Body of pancreas (tissue), 4 donors: ENCODE measurements at regions of chr2 and their contacts with region 1.

Region 1: DNA sequence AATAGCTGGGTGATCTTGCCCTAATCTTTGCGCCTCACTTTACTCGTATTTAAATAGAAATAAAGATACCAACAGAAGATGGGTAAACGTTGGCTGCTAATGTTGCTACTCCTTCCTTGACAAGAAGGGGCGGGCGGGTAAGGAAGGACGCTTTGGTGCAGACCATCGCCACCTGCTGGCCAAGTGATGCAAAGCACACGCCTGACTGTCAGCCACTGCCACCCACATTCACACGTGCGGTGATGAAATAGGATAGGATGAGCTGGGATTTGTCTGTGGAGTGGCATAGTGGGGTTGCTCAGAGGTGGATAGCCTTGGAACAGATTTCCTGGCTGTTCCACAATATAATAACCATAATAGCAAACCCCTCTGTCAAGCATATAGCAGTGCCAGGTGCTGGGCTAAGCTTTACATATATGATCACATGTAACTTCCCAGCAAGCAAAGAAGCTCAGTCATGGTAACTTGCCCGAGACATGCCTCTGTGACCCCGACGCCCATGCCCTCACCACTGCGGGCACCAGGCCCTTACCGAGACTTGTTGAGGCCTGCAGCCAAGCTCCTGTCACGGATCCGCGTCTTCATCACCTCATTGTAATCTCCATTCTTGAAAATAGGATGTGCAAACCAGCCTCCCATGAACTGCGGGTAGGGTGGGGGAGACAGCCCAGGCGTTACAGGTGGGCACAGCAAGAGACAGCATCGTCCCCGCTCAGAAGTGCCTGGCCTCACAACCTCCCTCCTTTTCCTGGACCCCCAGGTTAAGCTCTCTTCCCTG is 39.3 kb downstream of the LCT start:
- DNase-seq: peak; percentile 76 to 79 (median 78)
- ATAC-seq: peak; percentile 79
- H3K4me3 ChIP-seq: no peak overlapping the region
- H3K27ac ChIP-seq: no peak overlapping the region
- H3K4me1 ChIP-seq: peaks cover 5% of the 10 kb centered on the region
- H3K27me3 ChIP-seq: no peaks in the 10 kb centered on the region
- CTCF ChIP-seq: peak; percentile 74 to 88 (median 79)
- POLR2A ChIP-seq: no peak

Region 2: DNA sequence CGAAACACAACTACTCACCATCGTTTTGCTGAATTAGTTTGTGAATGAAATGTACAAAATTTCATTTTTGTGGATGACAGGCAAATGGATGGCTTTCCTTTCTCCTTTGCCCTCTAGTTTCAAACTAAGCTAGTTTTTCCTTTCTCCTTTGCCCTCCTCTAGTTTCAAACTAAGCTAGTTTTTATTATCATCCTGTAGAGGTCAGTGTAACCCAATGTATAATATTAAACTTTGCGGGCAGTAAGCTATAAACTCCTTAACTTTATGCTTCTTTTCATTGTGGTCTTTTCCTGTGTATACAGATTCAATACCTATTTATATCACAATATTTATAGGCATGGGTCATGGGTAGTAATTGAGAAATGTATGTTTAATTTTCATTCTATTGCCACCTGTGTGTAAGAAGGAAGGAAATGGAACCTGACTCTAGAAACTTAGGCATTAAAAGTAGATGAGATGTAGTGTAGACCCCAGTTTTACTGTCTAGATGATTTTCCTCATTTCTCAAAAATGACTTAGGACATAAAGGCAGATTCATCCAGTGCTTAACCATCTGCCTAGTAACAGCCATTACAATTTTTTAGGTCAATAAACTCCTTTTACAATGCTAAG is 808.6 kb before region 1 on chr2:
- intact Hi-C with region 1: loop called (anchors 10 kb)
- DNase-seq: no peak
- ATAC-seq: peak; percentile 47
- H3K4me3 ChIP-seq: no peak overlapping the region
- H3K27ac ChIP-seq: no peak overlapping the region
- H3K4me1 ChIP-seq: no peaks in the 10 kb centered on the region
- H3K27me3 ChIP-seq: no peaks in the 10 kb centered on the region
- CTCF ChIP-seq: peak in 6 of 7 experiments; percentile 33 to 61 (median 55)
- POLR2A ChIP-seq: no peak